ENCODE measurements at regions of chr17 and their contacts with region 1.

Region 1: GRCh38 chr17:7215652-7216180 is 3.9 kb downstream of the DLG4 start:
- DNase-seq: no peak
- ATAC-seq: no peak
- H3K4me3 ChIP-seq: peak overlapping the region; percentile 53 to 70
- H3K27ac ChIP-seq: peak overlapping the region; percentile 73
- H3K4me1 ChIP-seq: peaks cover 29% of the 10 kb centered on the region
- H3K27me3 ChIP-seq: no peaks in the 10 kb centered on the region
- CTCF ChIP-seq: no peak

Region 2: GRCh38 chr17:7095625-7096024 is 120.1 kb before region 1 on chr17:
- CTCF ChIA-PET with region 1: interaction called, 10 read pairs
- POLR2A ChIA-PET with region 1: no interaction called
- in situ Hi-C with region 1: no loop called
- intact Hi-C with region 1: no loop called
- DNase-seq: no peak
- ATAC-seq: no peak
- H3K4me3 ChIP-seq: no peak overlapping the region
- H3K27ac ChIP-seq: no peak overlapping the region
- H3K4me1 ChIP-seq: no peaks in the 10 kb centered on the region
- H3K27me3 ChIP-seq: no peaks in the 10 kb centered on the region
- CTCF ChIP-seq: no peak

Region 3: GRCh38 chr17:7204828-7205461 is 10.8 kb before region 1 on chr17:
- CTCF ChIA-PET with region 1: no interaction called
- POLR2A ChIA-PET with region 1: no interaction called
- in situ Hi-C with region 1: no loop called
- intact Hi-C with region 1: no loop called
- DNase-seq: no peak
- ATAC-seq: no peak
- H3K4me3 ChIP-seq: peak overlapping the region in 1 of 2 experiments; percentile 16; a peak in 1 of 4 replicates
- H3K27ac ChIP-seq: no peak overlapping the region
- H3K4me1 ChIP-seq: no peaks in the 10 kb centered on the region
- H3K27me3 ChIP-seq: no peaks in the 10 kb centered on the region
- CTCF ChIP-seq: no peak

Region 4: DNA sequence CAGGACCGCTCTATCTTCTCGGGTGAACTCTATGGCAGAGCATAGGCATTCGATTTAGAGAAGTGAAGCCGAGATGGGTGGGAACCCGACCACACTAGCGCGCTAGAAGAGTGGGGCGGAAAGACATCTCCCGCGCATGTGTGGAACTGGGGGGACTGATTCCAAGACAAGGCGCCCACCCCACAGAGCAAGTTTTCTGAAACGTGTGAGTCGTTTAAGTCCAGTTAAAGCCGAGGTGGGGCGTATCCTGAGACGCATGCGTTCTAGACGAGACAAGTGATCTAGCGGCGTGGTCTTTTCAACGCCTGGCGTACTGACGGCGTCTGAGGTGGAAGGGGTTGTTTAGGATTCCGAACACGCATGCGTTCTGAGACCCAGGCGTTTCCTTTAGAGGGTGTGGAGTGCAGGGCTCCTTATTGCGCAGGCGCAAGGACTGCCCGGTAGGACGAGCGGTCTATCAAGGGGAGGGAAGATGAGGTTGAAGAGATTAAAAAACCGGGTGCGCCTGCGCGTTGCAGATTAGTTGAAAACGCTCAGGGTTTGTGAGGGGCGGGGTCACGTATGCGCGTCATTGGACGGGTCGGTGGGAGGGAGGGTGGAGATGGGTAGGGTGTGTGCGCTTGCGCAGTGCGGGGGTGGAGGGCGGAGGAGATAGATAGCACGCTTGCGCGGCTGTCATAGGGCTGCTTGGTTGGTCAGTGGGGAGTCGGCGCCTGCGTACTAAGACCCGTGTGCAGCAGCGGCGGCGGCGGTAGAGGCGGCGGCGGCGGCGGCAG is 91.4 kb after region 1 on chr17 and contains the start of gene EIF5A:
- CTCF ChIA-PET with region 1: no interaction called
- POLR2A ChIA-PET with region 1: interaction called, 25 read pairs
- in situ Hi-C with region 1: no loop called
- intact Hi-C with region 1: no loop called
- DNase-seq: peak; percentile 100
- ATAC-seq: peak; percentile 89
- H3K4me3 ChIP-seq: peak within 1 kb of the TSS; percentile 86 to 92
- H3K27ac ChIP-seq: peak within 1 kb of the TSS; percentile 93
- H3K4me1 ChIP-seq: peaks cover 26% of the 10 kb centered on the region
- H3K27me3 ChIP-seq: no peaks in the 10 kb centered on the region
- CTCF ChIP-seq: no peak
- total RNA-seq, gene EIF5A: 728 TPM

Region 5: GRCh38 chr17:7363311-7363710 is 147.6 kb after region 1 on chr17:
- CTCF ChIA-PET with region 1: no interaction called
- POLR2A ChIA-PET with region 1: no interaction called
- in situ Hi-C with region 1: no loop called
- intact Hi-C with region 1: no loop called
- DNase-seq: no peak
- ATAC-seq: no peak
- H3K4me3 ChIP-seq: no peak overlapping the region
- H3K27ac ChIP-seq: no peak overlapping the region
- H3K4me1 ChIP-seq: no peaks in the 10 kb centered on the region
- H3K27me3 ChIP-seq: no peaks in the 10 kb centered on the region
- CTCF ChIP-seq: no peak